CD4-positive, alpha-beta memory T cell (primary cell): ENCODE measurements at regions of chr3 and their contacts with region 1.

Region 1: GRCh38 chr3:20039766-20040475 is at the start of gene KAT2B:
- DNase-seq: peak; percentile 81 to 88 (median 84)
- H3K4me3 ChIP-seq: peak within 1 kb of the TSS; percentile 71 to 99
- H3K4me3 Mint-ChIP-seq: peak within 1 kb of the TSS; percentile 93 to 99 (median 98)
- H3K27ac ChIP-seq: peak within 1 kb of the TSS; percentile 86
- H3K27ac Mint-ChIP-seq: peak within 1 kb of the TSS; percentile 96 to 99 (median 98)
- H3K4me1 ChIP-seq: peaks cover 51% of the 10 kb centered on the region
- H3K4me1 Mint-ChIP-seq: peaks cover 36 to 64% (median 48%) of the 10 kb centered on the region in 4 donors
- H3K27me3 ChIP-seq: no peaks in the 10 kb centered on the region
- H3K27me3 Mint-ChIP-seq: no peaks in the 10 kb centered on the region
- total RNA-seq, gene KAT2B: 81.3 to 85.9 TPM

Region 2: GRCh38 chr3:19146685-19147650 is 893.0 kb before region 1 on chr3:
- CTCF ChIA-PET with region 1: no interaction called
- POLR2A ChIA-PET with region 1: no interaction called
- intact Hi-C with region 1: loop called (anchors 10 kb)
- DNase-seq: peak; percentile 43 to 83 (median 55)
- H3K4me3 ChIP-seq: peak overlapping the region; percentile 32 to 72
- H3K4me3 Mint-ChIP-seq: peak overlapping the region; percentile 87 to 94 (median 92)
- H3K27ac ChIP-seq: no peak overlapping the region
- H3K27ac Mint-ChIP-seq: peak overlapping the region; percentile 34 to 87 (median 65)
- H3K4me1 ChIP-seq: peaks cover 22% of the 10 kb centered on the region
- H3K4me1 Mint-ChIP-seq: peaks cover 12 to 28% (median 17%) of the 10 kb centered on the region in 4 donors
- H3K27me3 ChIP-seq: peaks cover 7% of the 10 kb centered on the region
- H3K27me3 Mint-ChIP-seq: peaks cover 18 to 19% of the 10 kb centered on the region in 2 donors

Region 3: GRCh38 chr3:19931180-19931692 is 108.7 kb before region 1 on chr3:
- CTCF ChIA-PET with region 1: no interaction called
- POLR2A ChIA-PET with region 1: no interaction called
- intact Hi-C with region 1: no loop called
- DNase-seq: no peak
- H3K4me3 ChIP-seq: no peak overlapping the region
- H3K4me3 Mint-ChIP-seq: no peak overlapping the region
- H3K27ac ChIP-seq: no peak overlapping the region
- H3K27ac Mint-ChIP-seq: peak overlapping the region in 2 of 7 donors; percentile 39 to 48
- H3K4me1 ChIP-seq: no peaks in the 10 kb centered on the region
- H3K4me1 Mint-ChIP-seq: peaks cover 4 to 8% (median 5%) of the 10 kb centered on the region in 4 donors
- H3K27me3 ChIP-seq: no peaks in the 10 kb centered on the region
- H3K27me3 Mint-ChIP-seq: peaks cover 8 to 11% of the 10 kb centered on the region in 2 donors

Region 4: DNA sequence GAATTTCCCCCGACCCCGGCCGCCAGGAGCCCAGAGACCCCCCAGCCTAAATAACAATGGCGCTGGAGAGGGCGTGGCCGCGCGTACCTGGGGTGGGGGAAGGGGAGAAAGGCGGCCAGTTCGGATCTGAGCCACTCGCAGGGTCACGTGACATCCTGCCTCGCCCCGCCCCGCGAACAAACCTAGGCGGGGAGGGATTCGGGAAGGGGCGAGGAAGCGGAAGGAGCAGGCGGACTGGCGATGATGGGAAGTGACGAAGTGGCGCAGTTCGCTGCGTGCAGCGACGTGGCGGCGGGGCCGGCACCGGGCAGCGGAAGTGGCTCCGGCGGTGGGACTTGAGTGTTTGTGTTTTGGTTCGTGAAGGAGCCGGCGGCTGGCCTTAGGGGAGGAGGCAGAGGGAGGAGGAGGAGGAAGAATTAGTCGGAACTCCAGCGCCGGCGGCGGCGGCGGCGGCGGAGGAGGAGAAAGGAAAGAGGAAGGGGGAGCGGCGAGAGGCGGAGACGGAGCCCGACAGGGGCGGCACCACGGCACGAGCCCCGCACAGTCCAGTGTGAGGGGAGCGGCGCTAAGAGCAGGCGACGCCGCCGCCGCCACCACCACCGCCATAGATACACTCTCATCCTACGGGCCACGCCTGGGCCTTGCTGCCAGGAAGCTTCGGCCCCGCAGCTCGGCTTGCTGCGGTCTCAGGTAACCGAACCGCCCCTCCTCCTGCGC is 92.9 kb before region 1 on chr3 and contains the start of gene RAB5A:
- CTCF ChIA-PET with region 1: interaction called, 5 read pairs
- POLR2A ChIA-PET with region 1: interaction called, 62 read pairs
- intact Hi-C with region 1: loop called (anchors 1 kb)
- DNase-seq: peak; percentile 96 to 98 (median 96)
- H3K4me3 ChIP-seq: peak within 1 kb of the TSS; percentile 50 to 79
- H3K4me3 Mint-ChIP-seq: peak within 1 kb of the TSS; percentile 96 to 100 (median 99)
- H3K27ac ChIP-seq: peak within 1 kb of the TSS; percentile 98
- H3K27ac Mint-ChIP-seq: peak within 1 kb of the TSS; percentile 97 to 100 (median 99)
- H3K4me1 ChIP-seq: peaks cover 48% of the 10 kb centered on the region
- H3K4me1 Mint-ChIP-seq: peaks cover 32 to 68% (median 47%) of the 10 kb centered on the region in 4 donors
- H3K27me3 ChIP-seq: no peaks in the 10 kb centered on the region
- H3K27me3 Mint-ChIP-seq: no peaks in the 10 kb centered on the region
- total RNA-seq, gene RAB5A: 57.0 to 57.1 TPM

Region 5: GRCh38 chr3:20080956-20081554 is 41.1 kb after region 1 on chr3:
- CTCF ChIA-PET with region 1: no interaction called
- POLR2A ChIA-PET with region 1: interaction called, 14 read pairs
- intact Hi-C with region 1: loop called (anchors 5 kb)
- DNase-seq: peak in 4 of 5 donors; percentile 15 to 46 (median 21)
- H3K4me3 ChIP-seq: no peak overlapping the region
- H3K4me3 Mint-ChIP-seq: peak overlapping the region in 6 of 8 donors; percentile 39 to 74 (median 59)
- H3K27ac ChIP-seq: no peak overlapping the region
- H3K27ac Mint-ChIP-seq: peak overlapping the region; percentile 57 to 91 (median 83)
- H3K4me1 ChIP-seq: peaks cover 25% of the 10 kb centered on the region
- H3K4me1 Mint-ChIP-seq: peaks cover 26 to 48% (median 39%) of the 10 kb centered on the region in 4 donors
- H3K27me3 ChIP-seq: no peaks in the 10 kb centered on the region
- H3K27me3 Mint-ChIP-seq: no peaks in the 10 kb centered on the region

Region 6: DNA sequence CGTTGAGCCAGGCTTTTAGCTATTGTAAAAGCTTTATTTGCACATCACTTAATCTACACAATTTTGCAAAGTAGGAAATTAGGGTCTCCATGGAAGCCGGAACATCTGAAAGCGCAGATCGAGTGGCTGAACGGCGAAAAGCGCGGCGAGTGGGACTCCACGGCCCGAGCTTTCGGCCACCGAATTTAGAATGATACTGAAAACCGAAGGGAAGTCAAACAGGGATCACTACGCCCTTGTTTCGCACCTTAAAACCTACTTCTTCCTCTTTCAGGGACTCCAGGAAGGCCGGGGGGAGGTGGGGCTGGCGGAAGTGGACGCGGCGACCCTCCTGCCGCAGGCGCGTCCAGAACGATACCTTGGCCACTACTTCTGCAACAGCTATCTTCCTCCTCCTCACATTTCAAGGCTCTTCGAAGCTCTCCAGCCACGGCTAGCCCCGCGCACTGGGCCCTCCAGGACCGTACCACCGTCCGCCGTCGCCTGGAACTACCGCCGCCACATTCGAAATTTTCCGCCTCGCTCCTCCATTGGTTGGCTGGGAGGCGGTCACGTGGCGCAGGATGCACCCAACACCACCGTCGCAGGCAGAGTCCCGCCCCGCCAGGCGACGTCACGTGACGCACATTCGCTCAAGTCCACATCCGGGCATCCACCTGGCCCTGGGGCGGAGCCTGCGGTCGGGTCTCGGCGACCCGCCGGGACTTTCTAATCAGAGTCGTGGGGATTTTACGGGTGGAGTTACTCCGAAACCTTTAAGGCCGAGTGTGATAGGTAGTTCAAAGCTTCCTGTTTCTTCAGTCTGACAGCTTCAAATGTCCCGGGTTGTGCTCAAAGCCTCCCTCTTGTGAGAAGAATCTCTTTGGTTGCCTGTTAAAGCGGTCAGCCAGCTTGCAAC is 146.0 kb after region 1 on chr3 and contains the start of gene SGO1:
- CTCF ChIA-PET with region 1: interaction called, 12 read pairs
- POLR2A ChIA-PET with region 1: interaction called, 51 read pairs
- intact Hi-C with region 1: loop called (anchors 1 kb)
- DNase-seq: peak; percentile 99 to 100 (median 100)
- H3K4me3 ChIP-seq: peak within 1 kb of the TSS; percentile 69 to 92
- H3K4me3 Mint-ChIP-seq: no peak within 1 kb of the TSS
- H3K27ac ChIP-seq: peak within 1 kb of the TSS; percentile 93
- H3K27ac Mint-ChIP-seq: no peak within 1 kb of the TSS
- H3K4me1 ChIP-seq: peaks cover 28% of the 10 kb centered on the region
- H3K4me1 Mint-ChIP-seq: peaks cover 0 to 3% (median 0%) of the 10 kb centered on the region in 4 donors
- H3K27me3 ChIP-seq: no peaks in the 10 kb centered on the region
- H3K27me3 Mint-ChIP-seq: no peaks in the 10 kb centered on the region
- total RNA-seq, gene SGO1: 0.38 to 0.55 TPM

Region 7: DNA sequence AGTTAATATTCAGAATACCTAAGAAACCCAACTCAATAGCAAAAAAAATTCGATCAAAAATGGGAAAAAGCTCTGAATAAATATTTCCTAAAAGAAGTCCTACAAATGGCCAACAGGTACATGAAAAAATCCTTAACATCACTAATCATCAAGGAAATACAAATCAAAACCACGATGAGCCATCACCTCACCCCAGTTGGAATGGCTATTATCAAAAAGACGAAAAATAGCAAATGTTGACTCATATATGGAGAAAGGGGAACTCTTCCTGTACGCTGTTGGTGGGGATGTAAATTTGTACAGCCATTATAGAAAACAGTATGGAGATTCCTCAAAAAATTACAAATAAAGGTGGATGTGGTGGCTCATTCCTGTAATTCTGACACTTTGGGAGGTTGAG is 175.7 kb after region 1 on chr3:
- CTCF ChIA-PET with region 1: no interaction called
- POLR2A ChIA-PET with region 1: no interaction called
- intact Hi-C with region 1: no loop called
- DNase-seq: no peak
- H3K4me3 ChIP-seq: no peak overlapping the region
- H3K4me3 Mint-ChIP-seq: no peak overlapping the region
- H3K27ac ChIP-seq: no peak overlapping the region
- H3K27ac Mint-ChIP-seq: no peak overlapping the region
- H3K4me1 ChIP-seq: no peaks in the 10 kb centered on the region
- H3K4me1 Mint-ChIP-seq: no peaks in the 10 kb centered on the region
- H3K27me3 ChIP-seq: no peaks in the 10 kb centered on the region
- H3K27me3 Mint-ChIP-seq: no peaks in the 10 kb centered on the region